Colonic mucosa (tissue), 4 donors: ENCODE measurements at regions of chr2 and their contacts with region 1.

Region 1: DNA sequence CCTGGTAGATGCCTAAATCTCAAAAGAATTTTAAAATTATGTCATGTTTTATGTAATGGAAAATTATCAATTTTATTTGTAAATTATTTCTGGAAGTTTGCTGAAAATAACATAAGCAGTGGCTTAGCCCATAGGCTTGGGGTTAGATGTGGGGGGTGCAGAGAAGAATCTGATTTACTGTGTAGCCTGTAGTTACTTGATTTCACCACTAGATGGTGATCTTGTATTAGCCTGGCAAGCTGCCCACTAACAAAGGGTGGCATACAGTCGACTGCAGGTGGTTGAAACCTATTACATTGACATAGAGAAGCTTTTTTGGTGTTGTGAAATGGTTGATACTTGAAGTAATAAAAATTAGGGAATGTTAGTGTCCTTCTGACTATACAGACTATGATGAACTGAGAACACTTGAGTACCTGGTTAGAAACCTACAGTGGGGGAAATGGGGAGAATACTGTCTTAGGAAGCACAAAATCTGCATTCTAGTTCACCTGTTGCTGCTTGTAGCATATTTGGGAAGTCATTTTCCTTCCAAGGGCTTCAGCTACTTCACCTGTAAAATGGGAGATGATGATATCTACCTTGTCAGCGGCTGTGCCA is 191.0 kb upstream of the LHCGR start:
- DNase-seq: peak; percentile 39
- H3K4me3 ChIP-seq: no peak overlapping the region
- H3K27ac ChIP-seq: no peak overlapping the region
- H3K4me1 ChIP-seq: no peaks in the 10 kb centered on the region
- H3K27me3 ChIP-seq: no peaks in the 10 kb centered on the region
- CTCF ChIP-seq: peak; percentile 97

Region 2: GRCh38 chr2:49129034-49129433 is 182.5 kb after region 1 on chr2:
- intact Hi-C with region 1: no loop called
- DNase-seq: no peak
- H3K4me3 ChIP-seq: no peak overlapping the region
- H3K27ac ChIP-seq: no peak overlapping the region
- H3K4me1 ChIP-seq: no peaks in the 10 kb centered on the region
- H3K27me3 ChIP-seq: no peaks in the 10 kb centered on the region
- CTCF ChIP-seq: no peak

Region 3: GRCh38 chr2:49490710-49491109 is 544.2 kb after region 1 on chr2:
- intact Hi-C with region 1: loop called (anchors 5 kb)
- DNase-seq: peak; percentile 28
- H3K4me3 ChIP-seq: no peak overlapping the region
- H3K27ac ChIP-seq: no peak overlapping the region
- H3K4me1 ChIP-seq: no peaks in the 10 kb centered on the region
- H3K27me3 ChIP-seq: no peaks in the 10 kb centered on the region
- CTCF ChIP-seq: peak; percentile 64

Region 4: GRCh38 chr2:50133766-50134165 is 1187.2 kb after region 1 on chr2:
- intact Hi-C with region 1: loop called (anchors 10 kb)
- DNase-seq: no peak
- H3K4me3 ChIP-seq: no peak overlapping the region
- H3K27ac ChIP-seq: no peak overlapping the region
- H3K4me1 ChIP-seq: no peaks in the 10 kb centered on the region
- H3K27me3 ChIP-seq: no peaks in the 10 kb centered on the region
- CTCF ChIP-seq: no peak

Region 5: DNA sequence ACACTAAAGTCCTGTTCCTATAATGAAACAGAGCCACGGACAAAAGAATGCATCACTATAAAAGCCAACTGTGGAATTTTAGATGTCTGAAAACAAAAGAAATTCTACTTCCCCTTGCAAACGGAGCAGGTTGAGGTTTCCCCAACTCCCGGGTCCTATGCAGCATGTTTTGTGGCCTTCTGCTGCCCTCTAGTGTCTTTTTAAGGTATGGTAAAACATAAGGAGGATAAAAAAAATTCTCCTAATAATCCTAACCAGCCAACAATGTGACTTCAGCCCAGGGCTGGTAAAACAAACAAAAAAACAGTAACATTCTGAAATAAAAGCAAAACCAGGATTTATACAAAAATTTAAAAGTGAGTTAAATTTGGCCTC is 1545.9 kb after region 1 on chr2:
- intact Hi-C with region 1: loop called (anchors 5 kb)
- DNase-seq: peak; percentile 24
- H3K4me3 ChIP-seq: no peak overlapping the region
- H3K27ac ChIP-seq: no peak overlapping the region
- H3K4me1 ChIP-seq: no peaks in the 10 kb centered on the region
- H3K27me3 ChIP-seq: no peaks in the 10 kb centered on the region
- CTCF ChIP-seq: peak; percentile 62